ENCODE measurements at regions of chr17 and their contacts with region 1.

Region 1: GRCh38 chr17:59004338-59005111 is 102.2 kb downstream of the TRIM37 start:
- DNase-seq: peak; percentile 59 to 88
- H3K4me3 ChIP-seq: no peak overlapping the region
- CTCF ChIP-seq: peak in 1 of 3 donors; percentile 69
- POLR2A ChIP-seq: no peak

Region 2: DNA sequence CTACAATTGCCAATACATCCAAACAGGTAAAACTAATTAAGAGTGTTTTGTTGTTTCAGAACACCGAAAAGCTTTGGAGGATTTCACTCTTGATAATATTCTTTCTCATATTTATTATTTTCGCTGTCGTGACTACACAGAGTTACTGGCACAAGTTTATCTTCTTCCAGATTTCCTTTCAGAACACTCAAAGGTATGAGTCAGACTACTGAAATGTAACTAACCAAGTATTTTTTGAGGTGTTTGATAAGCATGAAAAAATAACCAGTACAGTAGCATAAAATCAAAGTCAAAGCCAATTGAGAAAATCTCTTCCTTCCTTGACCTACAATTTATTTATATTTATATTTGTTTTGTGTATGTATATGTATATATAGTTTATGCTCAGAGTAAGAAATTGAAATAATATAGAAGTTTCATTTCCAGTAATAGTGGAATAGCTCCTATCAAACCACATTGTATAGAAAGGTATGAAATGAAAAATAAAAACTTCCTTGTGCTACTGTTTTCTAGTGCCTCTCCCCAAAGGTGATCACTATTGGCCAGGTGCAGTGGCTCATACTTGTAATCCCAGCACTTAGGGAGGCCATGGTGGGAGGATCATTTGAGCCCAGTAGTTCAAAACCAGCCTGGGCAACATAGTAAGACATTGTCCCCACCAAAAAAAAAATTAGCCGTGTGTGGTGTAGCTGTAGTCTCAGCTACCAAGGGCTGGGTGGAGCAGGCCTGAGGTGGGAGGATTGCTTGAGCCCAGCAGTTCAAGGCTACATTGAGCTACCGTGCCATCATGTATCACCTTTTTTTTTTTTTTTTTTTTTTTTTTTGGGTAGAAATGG is 301.2 kb before region 1 on chr17:
- intact Hi-C with region 1: loop called (anchors 5 kb)
- DNase-seq: no peak
- H3K4me3 ChIP-seq: no peak overlapping the region
- CTCF ChIP-seq: no peak
- POLR2A ChIP-seq: no peak

Region 3: DNA sequence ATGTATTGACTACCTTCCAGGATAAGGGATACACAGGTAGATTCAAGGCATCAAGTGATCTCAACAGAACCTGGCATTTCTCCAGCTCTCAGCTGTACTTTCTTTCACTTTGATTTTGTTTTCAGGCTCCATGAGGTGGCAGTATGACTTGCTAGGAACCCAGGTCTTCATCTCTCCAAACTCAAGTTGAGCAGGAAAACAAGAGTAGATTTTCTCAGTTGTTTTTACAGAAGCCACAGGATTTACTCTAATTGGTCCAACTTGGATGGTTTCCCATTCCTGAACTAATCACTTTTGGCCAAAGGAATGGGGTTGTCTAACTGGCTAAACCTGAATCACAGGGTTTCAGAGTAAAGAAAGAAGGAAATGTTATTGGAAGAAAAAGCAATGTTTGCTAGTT is 44.5 kb before region 1 on chr17:
- intact Hi-C with region 1: loop called (anchors 2 kb)
- DNase-seq: no peak
- H3K4me3 ChIP-seq: no peak overlapping the region
- CTCF ChIP-seq: no peak
- POLR2A ChIP-seq: no peak

Measured in lower leg skin (tissue), 4 donors.